Aorta (tissue), 5 donors: ENCODE measurements at regions of chr3 and their contacts with region 1.

Region 1: DNA sequence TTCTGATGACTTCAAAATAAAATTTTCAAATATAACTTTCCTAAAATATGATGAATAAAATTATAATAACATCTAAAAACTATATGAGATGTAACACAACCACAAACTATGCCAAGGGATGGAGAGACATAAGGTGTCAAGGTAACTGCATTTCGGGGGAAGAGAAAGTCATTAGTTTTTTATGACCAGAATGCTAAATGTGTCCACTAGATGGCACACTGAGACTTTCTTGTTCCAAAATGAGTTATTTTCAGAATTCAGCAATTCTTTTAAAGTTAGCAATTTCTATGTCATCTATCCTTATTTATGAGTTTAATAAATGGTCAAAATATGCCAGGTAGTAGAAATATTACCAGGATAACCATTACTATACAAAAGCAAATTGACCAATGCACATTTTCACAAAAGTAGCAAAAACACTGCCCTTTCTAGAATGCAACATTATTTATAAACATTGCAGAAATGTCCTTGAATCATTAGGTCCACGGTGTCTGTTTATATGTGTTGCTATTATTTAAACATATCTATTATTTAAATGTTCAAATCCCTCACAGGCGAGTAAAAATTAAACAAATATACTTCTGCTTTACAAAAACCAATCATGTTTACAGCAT is 374.2 kb downstream of the PLCL2 start:
- DNase-seq: no peak
- ATAC-seq: no peak
- H3K4me3 ChIP-seq: no peak overlapping the region
- H3K27ac ChIP-seq: no peak overlapping the region
- H3K4me1 ChIP-seq: no peaks in the 10 kb centered on the region
- H3K27me3 ChIP-seq: no peaks in the 10 kb centered on the region

Region 2: GRCh38 chr3:17302774-17303173 is 43.8 kb after region 1 on chr3:
- intact Hi-C with region 1: no loop called
- DNase-seq: no peak
- ATAC-seq: no peak
- H3K4me3 ChIP-seq: no peak overlapping the region
- H3K27ac ChIP-seq: no peak overlapping the region
- H3K4me1 ChIP-seq: peaks cover 2 to 7% of the 10 kb centered on the region in 2 donors
- H3K27me3 ChIP-seq: no peaks in the 10 kb centered on the region

Region 3: GRCh38 chr3:17372362-17373210 is 113.7 kb after region 1 on chr3:
- intact Hi-C with region 1: no loop called
- DNase-seq: no peak
- ATAC-seq: no peak
- H3K4me3 ChIP-seq: no peak overlapping the region
- H3K27ac ChIP-seq: no peak overlapping the region
- H3K4me1 ChIP-seq: no peaks in the 10 kb centered on the region
- H3K27me3 ChIP-seq: no peaks in the 10 kb centered on the region

Region 4: GRCh38 chr3:17412950-17413530 is 154.1 kb after region 1 on chr3:
- intact Hi-C with region 1: loop called (anchors 2 to 5 kb)
- DNase-seq: no peak
- ATAC-seq: no peak
- H3K4me3 ChIP-seq: no peak overlapping the region
- H3K27ac ChIP-seq: no peak overlapping the region
- H3K4me1 ChIP-seq: no peaks in the 10 kb centered on the region
- H3K27me3 ChIP-seq: no peaks in the 10 kb centered on the region

Region 5: DNA sequence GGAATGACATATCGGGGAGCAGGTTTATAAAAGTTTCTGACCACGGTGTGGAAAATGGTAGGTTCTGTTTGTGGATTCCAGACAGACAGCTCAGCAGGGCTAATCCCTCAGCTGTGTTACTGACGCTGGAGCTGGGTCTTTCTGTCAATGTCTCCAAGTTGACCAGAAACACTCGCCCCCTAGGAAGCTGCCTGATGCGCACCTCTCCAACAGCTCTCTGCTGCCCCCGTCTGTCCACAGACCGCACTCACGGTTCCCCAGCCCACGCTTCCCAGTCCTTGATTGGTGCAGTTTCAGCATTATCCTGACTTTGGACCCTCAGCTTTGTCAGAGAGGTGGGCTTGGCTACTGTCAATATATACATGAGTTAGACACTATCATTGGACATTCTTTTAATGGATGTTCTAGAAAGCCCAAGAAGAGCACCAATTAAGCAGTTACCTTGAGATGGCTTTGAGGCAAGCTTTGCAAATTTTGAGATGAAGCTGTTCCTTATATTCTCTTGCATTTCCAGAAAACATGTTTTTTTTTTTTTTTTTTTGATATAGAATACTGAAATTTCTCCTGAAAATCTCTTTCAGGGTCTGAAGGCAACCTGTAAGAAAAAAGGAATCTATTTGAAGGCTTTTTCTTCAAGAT is 582.4 kb after region 1 on chr3:
- intact Hi-C with region 1: loop called (anchors 5 to 10 kb)
- DNase-seq: peak; percentile 62 to 91
- ATAC-seq: peak; percentile 92
- H3K4me3 ChIP-seq: no peak overlapping the region
- H3K27ac ChIP-seq: no peak overlapping the region
- H3K4me1 ChIP-seq: peaks cover 0 to 2% of the 10 kb centered on the region in 2 donors
- H3K27me3 ChIP-seq: no peaks in the 10 kb centered on the region